Vagina (tissue), 2 donors: ENCODE measurements at regions of chr15 and their contacts with region 1.

Region 1: GRCh38 chr15:37372064-37372463 is 271.7 kb upstream of the MEIS2 start:
- DNase-seq: no peak
- H3K4me3 ChIP-seq: no peak overlapping the region
- H3K27ac ChIP-seq: no peak overlapping the region
- H3K4me1 ChIP-seq: no peaks in the 10 kb centered on the region
- H3K27me3 ChIP-seq: no peaks in the 10 kb centered on the region
- CTCF ChIP-seq: no peak
- POLR2A ChIP-seq: no peak

Region 2: DNA sequence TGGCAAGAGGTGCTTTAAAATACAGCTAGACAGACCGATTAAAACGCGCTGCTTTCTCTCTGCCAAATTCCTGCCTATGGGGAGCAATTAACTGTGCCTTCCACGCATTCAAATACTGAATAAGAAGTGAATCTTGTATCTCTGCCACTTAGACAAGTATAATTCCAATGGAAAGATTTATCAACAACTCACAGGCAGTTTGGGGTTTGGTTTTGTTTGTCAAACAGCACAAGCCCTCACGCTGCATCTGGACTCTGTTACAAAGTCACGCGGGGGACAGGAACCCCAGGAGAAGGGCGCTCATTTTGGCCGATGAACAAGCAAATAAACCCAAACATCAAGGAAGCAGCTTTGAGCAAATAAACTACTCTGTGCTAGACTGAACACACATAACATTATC is 500.6 kb after region 1 on chr15:
- intact Hi-C with region 1: loop called (anchors 5 kb)
- DNase-seq: no peak
- H3K4me3 ChIP-seq: no peak overlapping the region
- H3K27ac ChIP-seq: no peak overlapping the region
- H3K4me1 ChIP-seq: no peaks in the 10 kb centered on the region
- H3K27me3 ChIP-seq: no peaks in the 10 kb centered on the region
- CTCF ChIP-seq: no peak
- POLR2A ChIP-seq: no peak